Activated CD8-positive, alpha-beta T cell treated with anti-CD3 and anti-CD28 coated beads for 36 hours (primary cell): ENCODE measurements at regions of chr19 and their contacts with region 1.

Region 1: GRCh38 chr19:35495107-35496064 is 5.1 kb upstream of the KRTDAP start:
- DNase-seq: peak; percentile 84
- ATAC-seq: peak; percentile 100
- H3K4me3 Mint-ChIP-seq: no peak overlapping the region
- H3K27ac Mint-ChIP-seq: no peak overlapping the region
- H3K4me1 Mint-ChIP-seq: peaks cover 8% of the 10 kb centered on the region
- H3K27me3 Mint-ChIP-seq: peaks cover 5% of the 10 kb centered on the region
- CTCF ChIP-seq: peak; percentile 98

Region 2: GRCh38 chr19:35347171-35347929 is 148.0 kb before region 1 on chr19 and contains the start of gene FFAR1:
- CTCF ChIA-PET with region 1: interaction called, 45 read pairs
- POLR2A ChIA-PET with region 1: interaction called, 4 read pairs
- intact Hi-C with region 1: loop called (anchors 2 kb)
- DNase-seq: peak; percentile 80
- ATAC-seq: peak; percentile 71
- H3K4me3 Mint-ChIP-seq: peak within 1 kb of the TSS; percentile 56
- H3K27ac Mint-ChIP-seq: peak within 1 kb of the TSS; percentile 99
- H3K4me1 Mint-ChIP-seq: peaks cover 31% of the 10 kb centered on the region
- H3K27me3 Mint-ChIP-seq: peaks cover 1% of the 10 kb centered on the region
- CTCF ChIP-seq: no peak
- total RNA-seq, gene FFAR1: not detected

Region 3: DNA sequence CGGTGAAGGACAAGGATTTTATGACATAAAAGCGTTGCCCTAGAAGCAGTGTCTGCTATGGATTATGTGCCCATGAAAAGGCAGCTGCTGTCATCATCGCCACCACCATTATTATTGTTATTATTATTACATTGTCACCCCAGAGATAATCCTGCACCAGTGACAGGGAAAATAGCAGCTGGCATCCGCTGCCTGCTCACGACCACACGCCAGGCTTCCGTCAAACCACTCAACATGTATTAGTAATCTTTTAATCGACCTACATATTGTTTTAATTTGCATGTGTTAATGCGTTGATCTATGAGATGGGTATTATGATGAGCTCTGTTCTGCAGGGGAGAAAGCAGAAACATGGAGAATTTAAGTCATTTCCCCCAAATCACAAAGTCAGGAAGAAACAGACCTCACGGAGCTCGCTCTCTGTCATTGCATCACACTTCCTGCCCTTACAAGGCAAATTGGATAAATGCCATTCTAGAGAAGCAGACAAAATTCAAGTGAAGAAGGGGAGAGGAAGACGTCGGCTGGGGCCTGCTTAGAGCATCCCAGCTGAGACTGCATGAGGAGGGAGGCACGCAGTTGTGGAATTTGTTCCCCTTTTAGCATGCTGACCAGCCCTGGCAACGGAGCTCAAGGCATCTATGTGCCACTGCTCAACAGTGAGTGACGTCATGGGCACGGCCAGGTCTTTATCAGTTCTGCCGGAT is 137.4 kb before region 1 on chr19 and contains the start of gene FFAR3:
- CTCF ChIA-PET with region 1: interaction called, 45 read pairs
- POLR2A ChIA-PET with region 1: interaction called, 3 read pairs
- intact Hi-C with region 1: loop called (anchors 2 kb)
- DNase-seq: peak; percentile 32
- ATAC-seq: peak; percentile 38
- H3K4me3 Mint-ChIP-seq: peak within 1 kb of the TSS; percentile 49
- H3K27ac Mint-ChIP-seq: peak within 1 kb of the TSS; percentile 65
- H3K4me1 Mint-ChIP-seq: peaks cover 9% of the 10 kb centered on the region
- H3K27me3 Mint-ChIP-seq: peaks cover 7% of the 10 kb centered on the region
- CTCF ChIP-seq: no peak
- total RNA-seq, gene FFAR3: 1.1 to 1.2 TPM

Region 4: DNA sequence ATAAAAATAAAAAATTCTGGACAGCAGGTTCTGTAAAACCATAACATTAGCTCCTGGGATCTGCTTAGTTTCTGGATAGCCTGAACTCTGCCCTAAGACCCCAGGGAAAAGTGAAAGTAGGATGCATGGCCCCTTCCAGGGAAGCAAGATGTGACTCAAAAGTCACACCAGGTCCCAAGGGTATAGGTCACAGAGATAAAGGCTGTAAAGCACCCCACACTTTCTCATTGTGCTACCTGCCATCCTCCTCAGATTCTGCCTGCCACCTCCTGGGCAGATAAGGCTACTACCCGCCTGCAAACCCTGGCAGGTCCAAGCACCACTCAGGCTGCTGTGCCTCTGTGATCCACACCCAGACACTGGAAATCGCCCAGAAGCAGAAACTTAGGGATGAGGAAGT is 26.7 kb before region 1 on chr19:
- CTCF ChIA-PET with region 1: interaction called, 13 read pairs
- POLR2A ChIA-PET with region 1: no interaction called
- intact Hi-C with region 1: no loop called
- DNase-seq: peak; percentile 77
- ATAC-seq: peak; percentile 96
- H3K4me3 Mint-ChIP-seq: no peak overlapping the region
- H3K27ac Mint-ChIP-seq: no peak overlapping the region
- H3K4me1 Mint-ChIP-seq: peaks cover 7% of the 10 kb centered on the region
- H3K27me3 Mint-ChIP-seq: no peaks in the 10 kb centered on the region
- CTCF ChIP-seq: peak; percentile 73

Region 5: DNA sequence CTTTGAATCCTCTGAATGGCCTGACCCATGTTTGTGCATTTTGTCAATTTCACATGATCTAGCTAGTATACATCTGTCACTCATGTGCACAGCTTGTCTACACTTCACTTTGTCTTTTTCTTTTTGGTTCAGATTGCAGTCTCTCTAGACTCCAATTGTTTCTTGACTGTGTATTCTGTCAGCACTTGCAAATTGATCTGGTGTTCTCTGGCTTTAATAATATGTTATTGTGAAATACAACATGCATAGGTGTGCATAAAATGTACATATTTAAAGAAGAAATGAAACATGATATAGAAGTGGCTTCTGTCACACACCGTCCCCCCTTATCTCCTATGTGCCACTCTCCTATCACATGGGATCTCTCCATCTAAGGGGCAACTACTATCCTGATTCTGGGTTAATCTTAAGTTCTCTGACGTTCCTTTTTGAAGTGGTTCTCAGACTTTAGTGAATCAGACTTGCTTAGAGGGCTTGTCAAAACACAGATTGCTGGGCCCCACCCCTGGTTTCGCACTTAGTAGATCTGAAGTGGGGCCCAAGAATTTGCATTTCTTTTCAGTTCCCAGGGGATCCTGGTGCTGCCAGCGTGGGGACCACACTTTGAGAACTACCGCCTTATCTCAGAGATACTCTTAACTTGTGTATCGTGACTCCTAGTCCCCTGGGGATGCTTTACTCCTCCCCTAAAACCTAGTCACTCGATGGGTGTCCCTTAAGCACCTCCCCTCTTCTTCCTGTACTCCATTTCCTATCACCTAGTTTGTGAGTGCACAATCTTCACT is 10.9 kb before region 1 on chr19:
- CTCF ChIA-PET with region 1: interaction called, 29 read pairs
- POLR2A ChIA-PET with region 1: no interaction called
- intact Hi-C with region 1: no loop called
- DNase-seq: peak; percentile 24
- ATAC-seq: peak; percentile 79
- H3K4me3 Mint-ChIP-seq: no peak overlapping the region
- H3K27ac Mint-ChIP-seq: no peak overlapping the region
- H3K4me1 Mint-ChIP-seq: peaks cover 10% of the 10 kb centered on the region
- H3K27me3 Mint-ChIP-seq: peaks cover 6% of the 10 kb centered on the region
- CTCF ChIP-seq: no peak